H1 (cell line): ENCODE measurements at regions of chr10 and their contacts with region 1.

Region 1: GRCh38 chr10:2619472-2619871 is 447.9 kb upstream of the PFKP start:
- DNase-seq: no peak
- H3K4me3 ChIP-seq: no peak overlapping the region
- H3K27ac ChIP-seq: no peak overlapping the region
- H3K4me1 ChIP-seq: peaks cover 4% of the 10 kb centered on the region in 4 experiments; a peak in 5 of 7 replicates
- H3K27me3 ChIP-seq: no peaks in the 10 kb centered on the region
- CTCF ChIP-seq: peak; percentile 46 to 82 (median 70)
- EP300 ChIP-seq: no peak
- POLR2A ChIP-seq: no peak
- RAD21 ChIP-seq: peak; percentile 76 to 80

Region 2: GRCh38 chr10:2392145-2392812 is 227.2 kb before region 1 on chr10:
- CTCF ChIA-PET with region 1: no interaction called
- POLR2A ChIA-PET with region 1: no interaction called
- DNase-seq: no peak
- H3K4me3 ChIP-seq: no peak overlapping the region
- H3K27ac ChIP-seq: no peak overlapping the region
- H3K4me1 ChIP-seq: no peaks in the 10 kb centered on the region
- H3K27me3 ChIP-seq: no peaks in the 10 kb centered on the region
- CTCF ChIP-seq: no peak
- EP300 ChIP-seq: no peak
- POLR2A ChIP-seq: no peak
- RAD21 ChIP-seq: no peak

Region 3: GRCh38 chr10:2445370-2445769 is 174.1 kb before region 1 on chr10:
- CTCF ChIA-PET with region 1: no interaction called
- POLR2A ChIA-PET with region 1: no interaction called
- DNase-seq: no peak
- H3K4me3 ChIP-seq: no peak overlapping the region
- H3K27ac ChIP-seq: no peak overlapping the region
- H3K4me1 ChIP-seq: no peaks in the 10 kb centered on the region
- H3K27me3 ChIP-seq: no peaks in the 10 kb centered on the region
- CTCF ChIP-seq: no peak
- EP300 ChIP-seq: no peak
- POLR2A ChIP-seq: no peak
- RAD21 ChIP-seq: no peak

Region 4: DNA sequence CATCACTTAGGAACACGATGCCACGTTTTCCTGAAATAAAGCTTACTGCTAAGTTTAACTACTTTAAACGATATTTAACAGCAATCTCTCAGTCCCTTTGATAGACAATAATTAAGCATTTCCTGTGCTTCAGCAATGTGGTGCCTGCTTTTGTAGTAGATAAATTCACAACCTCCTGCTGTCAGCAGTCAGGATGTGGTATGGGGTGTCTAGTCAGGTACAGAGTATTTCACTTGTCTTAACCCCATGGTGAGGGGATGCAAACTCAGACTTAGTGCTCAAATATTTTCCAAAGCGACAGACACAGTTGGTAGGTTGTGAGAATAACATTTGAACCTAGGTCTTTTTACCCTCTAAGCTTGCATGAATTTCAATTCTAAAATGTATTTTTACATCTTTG is 78.3 kb before region 1 on chr10:
- CTCF ChIA-PET with region 1: no interaction called
- POLR2A ChIA-PET with region 1: no interaction called
- DNase-seq: no peak
- H3K4me3 ChIP-seq: no peak overlapping the region
- H3K27ac ChIP-seq: no peak overlapping the region
- H3K4me1 ChIP-seq: peaks cover 0 to 3% (median 2%) of the 10 kb centered on the region in 4 experiments; a peak in 4 of 7 replicates
- H3K27me3 ChIP-seq: no peaks in the 10 kb centered on the region
- CTCF ChIP-seq: no peak
- EP300 ChIP-seq: no peak
- POLR2A ChIP-seq: no peak
- RAD21 ChIP-seq: no peak

Region 5: DNA sequence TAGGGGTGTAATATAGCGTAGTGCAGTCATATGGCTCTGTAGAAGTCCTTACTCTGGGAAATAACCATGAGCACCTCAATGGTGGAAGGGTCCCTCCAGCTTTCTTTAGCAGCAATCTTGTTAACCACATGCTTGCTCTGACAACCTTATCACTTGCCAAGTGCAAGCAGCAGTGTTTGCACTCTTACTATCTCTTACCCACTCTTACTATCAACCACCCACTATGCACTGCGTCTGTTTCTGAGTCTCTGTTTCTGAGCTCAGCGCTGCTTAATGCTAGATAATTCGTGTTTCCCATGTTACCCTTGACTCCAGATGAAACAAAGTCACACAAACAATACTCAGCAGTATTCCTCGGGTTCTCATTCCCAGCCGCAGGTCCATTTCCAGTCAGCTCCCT is 14.2 kb after region 1 on chr10:
- CTCF ChIA-PET with region 1: interaction called, 20 read pairs
- POLR2A ChIA-PET with region 1: no interaction called
- DNase-seq: no peak
- H3K4me3 ChIP-seq: no peak overlapping the region
- H3K27ac ChIP-seq: no peak overlapping the region
- H3K4me1 ChIP-seq: no peaks in the 10 kb centered on the region
- H3K27me3 ChIP-seq: no peaks in the 10 kb centered on the region
- CTCF ChIP-seq: no peak
- EP300 ChIP-seq: no peak
- POLR2A ChIP-seq: no peak
- RAD21 ChIP-seq: no peak